ENCODE measurements at regions of chr6 and their contacts with region 1.

Region 1: GRCh38 chr6:158718461-158719046 is 68.7 kb downstream of the SYTL3 start:
- DNase-seq: no peak
- H3K4me3 ChIP-seq: no peak overlapping the region
- H3K4me3 Mint-ChIP-seq: no peak overlapping the region
- H3K27ac ChIP-seq: peak overlapping the region in 1 of 2 donors; percentile 56
- H3K27ac Mint-ChIP-seq: peak overlapping the region in 5 of 7 donors; percentile 7 to 80 (median 36)
- H3K4me1 ChIP-seq: peaks cover 50 to 64% of the 10 kb centered on the region in 2 donors
- H3K4me1 Mint-ChIP-seq: peaks cover 61% of the 10 kb centered on the region
- H3K27me3 ChIP-seq: no peaks in the 10 kb centered on the region
- H3K27me3 Mint-ChIP-seq: peaks cover 0 to 3% (median 0%) of the 10 kb centered on the region in 3 donors
- CTCF ChIP-seq: peak; percentile 35

Region 2: GRCh38 chr6:158758451-158758861 is 39.9 kb after region 1 on chr6:
- intact Hi-C with region 1: loop called in 1 of 2 experiments (anchors 5 kb)
- DNase-seq: no peak
- H3K4me3 ChIP-seq: no peak overlapping the region
- H3K4me3 Mint-ChIP-seq: no peak overlapping the region
- H3K27ac ChIP-seq: no peak overlapping the region
- H3K27ac Mint-ChIP-seq: peak overlapping the region in 1 of 7 donors; percentile 15
- H3K4me1 ChIP-seq: no peaks in the 10 kb centered on the region
- H3K4me1 Mint-ChIP-seq: peaks cover 2% of the 10 kb centered on the region
- H3K27me3 ChIP-seq: no peaks in the 10 kb centered on the region
- H3K27me3 Mint-ChIP-seq: no peaks in the 10 kb centered on the region
- CTCF ChIP-seq: no peak

Measured in CD14-positive monocyte (primary cell).